ENCODE measurements at regions of chr3 and their contacts with region 1.

Region 1: DNA sequence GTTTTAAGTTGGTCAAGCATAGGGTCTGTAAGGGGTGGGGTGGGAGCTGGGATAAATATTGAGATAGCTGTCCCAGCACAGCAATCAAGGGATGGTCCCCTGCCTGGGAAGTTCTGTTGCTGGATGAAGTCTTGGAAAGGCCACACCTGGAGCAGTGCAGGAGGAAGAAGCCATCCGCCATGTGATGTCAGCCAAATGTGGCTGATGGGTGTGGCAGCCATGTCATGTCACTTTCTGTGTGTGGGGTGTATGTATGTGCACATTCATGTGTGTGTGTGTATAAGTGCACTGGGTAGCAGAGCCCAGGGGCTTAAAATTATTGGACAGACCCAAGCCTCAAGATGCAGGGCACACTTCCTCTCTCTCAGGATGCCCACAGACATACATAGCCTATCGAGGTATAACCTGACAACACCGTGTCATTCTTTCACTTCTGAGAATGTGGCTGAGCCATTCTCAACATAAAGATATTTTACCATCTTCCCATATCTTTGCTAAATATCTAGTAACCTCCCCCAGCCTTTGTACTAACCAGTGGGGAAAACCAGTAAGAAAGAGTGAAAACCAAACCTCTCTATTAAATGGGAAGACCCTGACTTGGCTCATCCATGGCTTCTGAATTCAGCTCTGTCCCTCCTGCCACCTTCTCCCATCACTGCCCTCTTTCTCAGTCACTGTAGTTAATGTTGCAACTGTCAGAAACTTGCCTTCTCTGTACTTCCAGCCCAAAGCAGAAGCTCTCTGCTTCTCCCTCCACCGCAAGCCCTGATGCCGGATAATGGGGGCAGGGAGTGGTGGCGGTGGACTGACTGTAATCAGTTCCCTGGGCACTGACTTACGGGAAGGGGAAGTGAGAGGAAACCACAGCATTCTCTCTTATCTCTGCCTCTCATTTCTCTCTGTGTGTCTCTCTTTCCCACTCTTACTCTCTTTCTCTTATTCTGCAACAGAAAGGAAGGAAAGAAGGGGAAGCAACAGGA is 11.2 kb downstream of the TNFSF10 start:
- DNase-seq: no peak
- ATAC-seq: no peak
- H3K4me3 ChIP-seq: no peak overlapping the region
- H3K27ac ChIP-seq: no peak overlapping the region
- H3K4me1 ChIP-seq: peaks cover 8% of the 10 kb centered on the region
- H3K27me3 ChIP-seq: peaks cover 2% of the 10 kb centered on the region; the same call in 1 of the 2 replicates
- CTCF ChIP-seq: no peak
- POLR2A ChIP-seq: no peak
- RAD21 ChIP-seq: no peak

Region 2: DNA sequence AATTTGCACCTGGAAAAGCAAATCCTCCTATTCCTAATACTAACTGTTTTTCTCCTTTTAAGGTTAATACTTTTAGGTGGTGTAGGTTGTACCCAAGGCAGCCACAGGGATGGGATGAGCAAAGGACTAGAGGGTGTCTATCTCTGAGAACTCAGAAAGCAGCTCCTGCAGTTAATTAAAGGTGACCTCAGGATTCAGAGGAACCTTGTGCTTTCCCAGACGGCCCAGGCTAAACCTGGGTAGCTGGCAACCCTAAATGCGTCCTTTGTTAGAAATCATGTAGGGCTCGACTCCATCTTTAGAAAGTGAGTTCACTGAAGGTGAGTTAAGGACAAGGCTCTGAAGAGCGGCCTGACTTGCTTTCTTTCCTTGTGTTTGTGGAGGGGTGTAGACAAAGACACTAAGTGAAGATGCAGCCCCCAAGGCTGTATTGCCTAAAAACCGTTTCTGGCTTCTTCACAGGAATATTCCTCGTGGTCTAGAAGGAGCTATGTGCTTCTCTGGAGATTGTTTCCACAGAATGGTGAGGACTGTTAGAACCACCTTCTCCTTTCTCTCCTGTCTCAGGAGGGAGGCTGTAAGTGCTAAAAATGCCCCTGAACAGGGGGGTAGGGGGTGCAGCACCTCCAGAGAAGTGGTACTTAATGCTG is 457.8 kb before region 1 on chr3:
- CTCF ChIA-PET with region 1: no interaction called
- POLR2A ChIA-PET with region 1: interaction called, 12 read pairs
- dilution Hi-C with region 1: no loop called
- in situ Hi-C with region 1: no loop called
- intact Hi-C with region 1: no loop called
- DNase-seq: no peak
- ATAC-seq: no peak
- H3K4me3 ChIP-seq: no peak overlapping the region
- H3K27ac ChIP-seq: 0 out of 2 replicates have a peak overlapping the region, but pooled peaks have one; percentile 10
- H3K4me1 ChIP-seq: peaks cover 15% of the 10 kb centered on the region
- H3K27me3 ChIP-seq: no peaks in the 10 kb centered on the region
- CTCF ChIP-seq: no peak
- POLR2A ChIP-seq: no peak
- RAD21 ChIP-seq: no peak

Region 3: GRCh38 chr3:172750368-172751174 is 238.5 kb after region 1 on chr3 and contains the start of gene ECT2:
- CTCF ChIA-PET with region 1: no interaction called
- POLR2A ChIA-PET with region 1: no interaction called
- dilution Hi-C with region 1: no loop called
- in situ Hi-C with region 1: no loop called
- intact Hi-C with region 1: no loop called
- DNase-seq: peak; percentile 100
- ATAC-seq: peak; percentile 98
- H3K4me3 ChIP-seq: peak within 1 kb of the TSS; percentile 83
- H3K27ac ChIP-seq: peak within 1 kb of the TSS; percentile 74
- H3K4me1 ChIP-seq: no peaks in the 10 kb centered on the region; the same call in 1 of the 2 replicates
- H3K27me3 ChIP-seq: no peaks in the 10 kb centered on the region
- CTCF ChIP-seq: peak; percentile 89
- POLR2A ChIP-seq: no peak; the same call in 1 of the 2 replicates
- RAD21 ChIP-seq: peak; percentile 72
- total RNA-seq, gene ECT2: 37.8 and 55.8 TPM in 2 replicates